Naive thymus-derived CD4-positive, alpha-beta T cell (primary cell): ENCODE measurements at regions of chr5 and their contacts with region 1.

Region 1: DNA sequence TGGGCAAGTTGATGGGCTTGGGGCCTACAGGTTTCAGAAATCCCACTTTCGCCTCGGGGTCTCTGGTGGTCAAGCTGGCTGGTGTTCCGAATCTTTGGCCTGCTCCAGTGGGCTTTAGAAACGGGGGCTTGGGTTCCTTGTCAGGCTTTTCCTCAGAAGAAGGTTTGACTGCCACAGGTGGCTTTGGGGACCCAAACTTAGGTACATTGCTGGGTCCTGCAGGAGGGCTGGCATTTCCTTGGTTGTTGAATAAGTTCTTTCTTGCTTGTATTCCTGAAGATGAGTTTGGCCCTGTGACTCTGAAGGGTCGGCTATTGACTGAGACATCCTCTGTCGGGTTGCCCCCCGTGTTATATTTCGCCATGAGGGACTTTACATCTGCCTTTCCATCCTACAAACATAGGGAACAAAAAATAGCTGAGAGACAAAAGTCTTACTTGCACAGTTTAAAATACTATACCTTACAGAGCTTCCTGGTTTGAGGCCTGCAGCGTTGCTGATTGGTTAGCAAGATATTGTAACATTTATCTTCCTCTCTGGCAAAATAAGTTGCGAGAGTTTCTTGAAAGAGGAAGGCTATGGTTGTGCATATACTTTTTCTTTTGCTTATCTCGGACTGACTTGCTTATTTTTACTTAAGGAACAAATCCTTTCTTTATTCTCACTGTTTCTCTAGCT is 16.6 kb downstream of the FYB1 start:
- DNase-seq: peak in 7 of 9 donors; percentile 57 to 72 (median 66)
- ATAC-seq: peak; percentile 82
- H3K4me3 ChIP-seq: peak overlapping the region; percentile 82
- H3K4me3 Mint-ChIP-seq: peak overlapping the region; percentile 75 to 100 (median 96)
- H3K27ac ChIP-seq: peak overlapping the region; percentile 93
- H3K27ac Mint-ChIP-seq: peak overlapping the region; percentile 86 to 99 (median 98)
- H3K4me1 ChIP-seq: peaks cover 43 to 48% of the 10 kb centered on the region in 2 donors
- H3K4me1 Mint-ChIP-seq: peaks cover 28 to 45% (median 44%) of the 10 kb centered on the region in 7 donors
- H3K27me3 ChIP-seq: no peaks in the 10 kb centered on the region
- H3K27me3 Mint-ChIP-seq: no peaks in the 10 kb centered on the region

Region 2: GRCh38 chr5:39138892-39139291 is 63.8 kb before region 1 on chr5:
- CTCF ChIA-PET with region 1: interaction called, 3 read pairs
- POLR2A ChIA-PET with region 1: interaction called, 12 read pairs
- intact Hi-C with region 1: no loop called
- DNase-seq: no peak
- ATAC-seq: no peak
- H3K4me3 ChIP-seq: no peak overlapping the region
- H3K4me3 Mint-ChIP-seq: no peak overlapping the region
- H3K27ac ChIP-seq: no peak overlapping the region
- H3K27ac Mint-ChIP-seq: peak overlapping the region in 3 of 9 donors; percentile 14 to 77 (median 23)
- H3K4me1 ChIP-seq: peaks cover 6 to 10% of the 10 kb centered on the region in 2 donors
- H3K4me1 Mint-ChIP-seq: peaks cover 12 to 51% (median 31%) of the 10 kb centered on the region in 7 donors
- H3K27me3 ChIP-seq: no peaks in the 10 kb centered on the region
- H3K27me3 Mint-ChIP-seq: no peaks in the 10 kb centered on the region

Region 3: DNA sequence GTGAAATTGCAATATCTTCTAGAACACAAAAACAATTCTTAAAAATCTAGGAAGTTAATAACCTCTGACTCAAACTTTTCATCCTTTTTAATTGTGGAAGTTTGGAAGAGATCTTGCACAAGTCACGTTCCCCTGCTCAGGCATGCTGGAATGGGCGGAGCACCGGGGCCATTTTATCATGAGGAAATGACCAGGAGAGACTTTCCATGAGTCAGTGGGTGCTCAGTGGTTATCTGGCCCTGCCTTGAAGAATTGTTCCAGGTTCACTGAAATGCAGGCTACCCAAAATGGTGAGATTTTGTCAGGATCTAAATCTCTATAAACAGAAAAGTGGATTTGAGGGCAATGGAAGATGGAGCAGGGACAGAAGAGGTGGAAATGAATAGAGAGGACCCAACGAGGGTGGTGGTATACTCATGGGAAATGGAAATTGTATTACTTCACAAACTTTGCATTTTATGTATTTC is 44.6 kb before region 1 on chr5:
- CTCF ChIA-PET with region 1: interaction called, 3 read pairs
- POLR2A ChIA-PET with region 1: interaction called, 679 read pairs
- intact Hi-C with region 1: no loop called
- DNase-seq: no peak
- ATAC-seq: no peak
- H3K4me3 ChIP-seq: no peak overlapping the region
- H3K4me3 Mint-ChIP-seq: peak overlapping the region in 9 of 10 donors; percentile 34 to 81 (median 61)
- H3K27ac ChIP-seq: peak overlapping the region; percentile 57
- H3K27ac Mint-ChIP-seq: peak overlapping the region in 8 of 9 donors; percentile 41 to 94 (median 78)
- H3K4me1 ChIP-seq: peaks cover 48 to 81% of the 10 kb centered on the region in 2 donors
- H3K4me1 Mint-ChIP-seq: peaks cover 52 to 97% (median 88%) of the 10 kb centered on the region in 7 donors
- H3K27me3 ChIP-seq: no peaks in the 10 kb centered on the region
- H3K27me3 Mint-ChIP-seq: no peaks in the 10 kb centered on the region

Region 4: GRCh38 chr5:39164529-39165402 is 38.0 kb before region 1 on chr5:
- CTCF ChIA-PET with region 1: no interaction called
- POLR2A ChIA-PET with region 1: interaction called, 679 read pairs
- intact Hi-C with region 1: loop called (anchors 1 to 2 kb)
- DNase-seq: peak in 1 of 9 donors; percentile 34
- ATAC-seq: peak; percentile 71
- H3K4me3 ChIP-seq: peak overlapping the region; percentile 12
- H3K4me3 Mint-ChIP-seq: peak overlapping the region; percentile 58 to 83 (median 76)
- H3K27ac ChIP-seq: peak overlapping the region; percentile 60
- H3K27ac Mint-ChIP-seq: peak overlapping the region; percentile 78 to 96 (median 89)
- H3K4me1 ChIP-seq: peaks cover 73 to 74% of the 10 kb centered on the region in 2 donors
- H3K4me1 Mint-ChIP-seq: peaks cover 71 to 99% (median 95%) of the 10 kb centered on the region in 7 donors
- H3K27me3 ChIP-seq: no peaks in the 10 kb centered on the region
- H3K27me3 Mint-ChIP-seq: no peaks in the 10 kb centered on the region

Region 5: GRCh38 chr5:39187831-39188731 is 14.7 kb before region 1 on chr5:
- CTCF ChIA-PET with region 1: interaction called, 56 read pairs
- POLR2A ChIA-PET with region 1: interaction called, 679 read pairs
- intact Hi-C with region 1: loop called (anchors 1 to 2 kb)
- DNase-seq: peak in 2 of 9 donors; percentile 46 to 50
- ATAC-seq: peak; percentile 45
- H3K4me3 ChIP-seq: peak overlapping the region; percentile 36
- H3K4me3 Mint-ChIP-seq: peak overlapping the region; percentile 78 to 98 (median 88)
- H3K27ac ChIP-seq: peak overlapping the region; percentile 73
- H3K27ac Mint-ChIP-seq: peak overlapping the region; percentile 92 to 99 (median 98)
- H3K4me1 ChIP-seq: peaks cover 75 to 85% of the 10 kb centered on the region in 2 donors
- H3K4me1 Mint-ChIP-seq: peaks cover 58 to 97% (median 91%) of the 10 kb centered on the region in 7 donors
- H3K27me3 ChIP-seq: no peaks in the 10 kb centered on the region
- H3K27me3 Mint-ChIP-seq: no peaks in the 10 kb centered on the region

Region 6: DNA sequence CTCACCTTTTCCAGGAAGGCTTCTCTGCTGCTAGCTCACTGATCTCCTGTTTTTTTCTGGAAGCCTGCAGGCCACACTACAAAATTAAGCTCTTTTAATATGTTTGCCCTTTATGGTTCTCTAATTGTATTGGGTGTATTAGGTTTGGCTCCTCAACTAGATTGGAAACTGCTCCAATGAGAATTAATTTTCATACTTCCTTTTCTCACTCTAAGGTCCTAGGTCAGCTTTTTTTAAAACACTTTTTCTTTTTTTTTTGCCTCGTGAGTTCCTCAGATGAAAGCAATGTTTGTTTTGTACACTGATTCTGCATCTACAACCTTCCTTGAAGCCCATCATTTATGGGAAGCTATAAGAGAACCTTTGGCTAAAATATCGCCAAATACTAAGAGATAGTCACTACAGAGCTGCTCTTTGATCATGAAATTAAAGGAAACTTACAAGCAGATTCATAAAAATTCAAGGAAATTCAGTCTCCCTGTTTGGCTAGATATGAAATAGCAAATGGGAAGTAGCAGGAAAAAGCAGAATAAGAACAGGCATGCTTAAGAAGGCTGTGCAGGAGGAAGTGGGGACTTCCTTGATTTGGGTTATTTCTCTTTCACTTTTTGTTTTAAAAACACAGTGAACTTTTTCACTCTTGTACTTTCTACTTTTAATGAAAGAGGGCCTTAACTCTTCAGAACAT is 71.8 kb after region 1 on chr5:
- CTCF ChIA-PET with region 1: interaction called, 3 read pairs
- POLR2A ChIA-PET with region 1: interaction called, 33 read pairs
- intact Hi-C with region 1: no loop called
- DNase-seq: peak in 7 of 9 donors; percentile 29 to 52 (median 46)
- ATAC-seq: peak; percentile 68
- H3K4me3 ChIP-seq: peak overlapping the region; percentile 59
- H3K4me3 Mint-ChIP-seq: peak overlapping the region; percentile 63 to 88 (median 85)
- H3K27ac ChIP-seq: peak overlapping the region; percentile 74
- H3K27ac Mint-ChIP-seq: peak overlapping the region; percentile 92 to 98 (median 96)
- H3K4me1 ChIP-seq: peaks cover 34 to 49% of the 10 kb centered on the region in 2 donors
- H3K4me1 Mint-ChIP-seq: peaks cover 25 to 67% (median 47%) of the 10 kb centered on the region in 7 donors
- H3K27me3 ChIP-seq: no peaks in the 10 kb centered on the region
- H3K27me3 Mint-ChIP-seq: no peaks in the 10 kb centered on the region